ENCODE measurements at regions of chr21 and their contacts with region 1.

Region 1: DNA sequence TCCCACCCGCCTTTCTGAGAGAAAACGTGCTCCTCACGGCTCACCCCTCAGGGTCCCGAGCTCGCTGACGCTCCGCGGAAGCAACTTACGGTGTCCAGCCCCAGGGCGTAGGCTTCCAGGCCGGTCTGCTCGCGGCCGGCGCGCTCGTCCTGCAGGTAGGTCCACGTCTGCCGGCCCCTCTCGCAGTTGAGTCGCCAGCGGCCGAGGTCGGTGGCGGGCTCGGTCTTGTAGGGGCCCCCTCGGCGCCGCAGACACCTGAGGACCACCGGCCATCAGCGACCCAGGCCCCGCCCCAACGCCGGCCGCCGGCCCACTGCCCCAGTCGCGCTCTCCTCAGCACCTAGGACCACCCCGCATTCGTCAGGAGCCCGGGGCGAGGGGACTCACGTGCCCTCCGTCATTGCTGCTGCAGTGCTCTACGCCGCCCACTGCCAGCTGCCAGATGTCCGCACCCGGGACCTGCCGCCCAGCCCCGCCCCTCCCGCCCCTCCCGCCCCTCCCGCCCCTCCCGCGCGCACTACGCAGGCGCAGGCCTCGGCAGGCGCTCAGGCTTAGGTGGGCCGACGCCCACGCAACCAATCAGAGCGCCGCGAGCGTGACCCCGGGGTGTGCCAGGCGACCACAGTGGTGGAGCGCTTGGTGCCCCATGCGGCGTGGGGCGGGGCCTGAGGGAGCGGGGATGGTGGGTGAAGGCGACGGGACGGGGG is at the start of gene LSS:
- DNase-seq: peak; percentile 96
- ATAC-seq: peak; percentile 93
- H3K4me3 Mint-ChIP-seq: peak within 1 kb of the TSS; percentile 99
- H3K27ac Mint-ChIP-seq: peak within 1 kb of the TSS; percentile 97
- H3K4me1 Mint-ChIP-seq: peaks cover 39% of the 10 kb centered on the region
- H3K27me3 Mint-ChIP-seq: no peaks in the 10 kb centered on the region
- CTCF ChIP-seq: no peak
- total RNA-seq, gene LSS: 76.3 and 99.0 TPM in 2 replicates

Region 2: DNA sequence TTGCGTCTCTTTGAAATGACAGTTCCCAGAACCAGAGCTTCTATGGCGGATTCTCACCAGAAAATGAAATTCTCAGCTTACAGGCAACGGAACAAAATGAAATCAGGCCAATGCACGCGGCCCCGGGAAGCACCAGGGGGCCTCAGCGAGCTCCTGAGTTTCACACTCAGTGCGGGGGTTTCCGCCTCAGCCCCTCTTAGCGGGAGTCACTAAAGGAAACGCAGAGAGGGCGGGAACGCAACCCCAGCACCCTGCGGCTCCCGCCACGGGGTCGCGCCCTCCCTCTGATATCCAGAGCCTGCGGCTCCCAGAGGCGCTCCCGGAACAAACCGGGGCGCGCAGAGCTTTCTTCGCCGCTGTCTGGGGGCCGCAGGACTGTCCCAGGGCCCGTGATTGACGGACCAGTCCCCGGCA is 254.8 kb before region 1 on chr21:
- CTCF ChIA-PET with region 1: no interaction called
- POLR2A ChIA-PET with region 1: no interaction called
- intact Hi-C with region 1: loop called (anchors 5 kb)
- DNase-seq: peak; percentile 54
- ATAC-seq: peak; percentile 87
- H3K4me3 Mint-ChIP-seq: peak overlapping the region; percentile 82
- H3K27ac Mint-ChIP-seq: no peak overlapping the region
- H3K4me1 Mint-ChIP-seq: peaks cover 6% of the 10 kb centered on the region
- H3K27me3 Mint-ChIP-seq: peaks cover 25% of the 10 kb centered on the region
- CTCF ChIP-seq: no peak

Region 3: GRCh38 chr21:46184625-46185555 is 43.6 kb before region 1 on chr21:
- CTCF ChIA-PET with region 1: no interaction called
- POLR2A ChIA-PET with region 1: interaction called, 6 read pairs
- intact Hi-C with region 1: loop called (anchors 1 kb)
- DNase-seq: peak; percentile 69
- ATAC-seq: peak; percentile 82
- H3K4me3 Mint-ChIP-seq: peak overlapping the region; percentile 89
- H3K27ac Mint-ChIP-seq: peak overlapping the region; percentile 85
- H3K4me1 Mint-ChIP-seq: peaks cover 5% of the 10 kb centered on the region
- H3K27me3 Mint-ChIP-seq: no peaks in the 10 kb centered on the region
- CTCF ChIP-seq: no peak